ENCODE measurements at regions of chr3 and their contacts with region 1.

Region 1: DNA sequence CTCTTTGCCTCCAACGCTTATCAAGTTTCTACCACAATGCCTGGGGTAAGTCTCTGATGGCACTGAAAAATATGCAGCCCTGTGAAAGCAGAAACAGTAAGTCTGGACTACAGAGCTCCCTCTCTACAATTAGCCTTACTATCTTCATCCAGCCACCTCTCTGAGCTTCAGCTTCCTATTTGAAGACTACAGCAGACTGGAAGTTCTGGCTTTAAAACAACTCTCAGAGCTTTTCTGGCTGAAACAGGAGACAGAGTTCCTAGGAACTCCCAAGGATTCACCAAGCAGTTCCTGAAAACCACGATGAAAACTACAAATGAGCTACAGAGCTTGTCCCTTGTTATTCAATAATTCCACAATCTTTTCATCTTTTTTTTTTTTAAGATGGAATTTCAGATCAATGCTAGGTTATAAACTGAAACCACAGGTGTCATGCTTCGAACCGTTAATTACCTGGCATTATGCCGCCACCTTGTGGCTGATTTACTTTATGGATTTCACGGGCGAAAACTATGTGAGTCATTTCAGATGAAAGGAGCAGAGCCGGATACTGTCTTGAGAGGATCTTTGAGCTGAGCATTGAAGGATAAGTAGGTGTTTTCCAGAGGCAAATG is 3.9 kb downstream of the CRYGS start:
- DNase-seq: peak in 4 of 5 donors; percentile 71 to 89 (median 81)
- H3K4me3 ChIP-seq: peak overlapping the region in 2 of 3 donors; percentile 44 to 48
- H3K27ac ChIP-seq: peak overlapping the region in 1 of 2 donors; percentile 7
- H3K4me1 ChIP-seq: peaks cover 0 to 2% (median 0%) of the 10 kb centered on the region in 3 donors
- H3K27me3 ChIP-seq: no peaks in the 10 kb centered on the region
- CTCF ChIP-seq: peak; percentile 78

Region 2: DNA sequence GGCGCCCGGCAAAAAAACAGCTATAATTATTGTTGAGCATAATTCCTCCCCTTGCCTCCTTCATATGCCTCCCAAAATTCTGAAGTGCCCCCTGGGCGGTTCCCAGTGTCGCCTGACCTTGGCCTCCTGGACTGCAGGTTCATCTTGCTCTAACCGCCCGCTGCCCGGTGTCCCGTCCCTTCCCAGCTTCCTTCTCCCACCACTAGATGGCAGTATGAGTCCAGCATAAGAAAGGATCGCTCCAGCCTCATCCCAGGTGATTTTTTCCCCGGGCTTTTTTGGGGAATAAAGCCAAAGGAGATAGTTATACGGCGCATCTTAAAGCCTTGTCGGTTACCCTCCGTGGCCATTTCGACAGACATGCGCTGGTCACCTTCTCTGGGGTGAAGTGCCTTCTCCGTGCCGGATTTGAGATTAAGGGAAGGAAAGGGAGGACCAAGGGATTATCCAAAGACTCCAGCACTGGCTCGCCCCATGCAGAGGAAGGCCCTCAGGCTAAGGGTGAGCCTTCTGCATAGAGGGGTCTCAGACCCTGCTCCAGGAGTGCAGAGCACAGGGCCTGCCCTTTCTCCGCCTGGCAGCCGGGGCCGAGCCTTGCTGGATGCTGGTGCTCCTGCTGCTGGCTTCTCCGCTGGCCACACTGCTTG is 556.7 kb before region 1 on chr3:
- intact Hi-C with region 1: loop called (anchors 5 kb)
- DNase-seq: peak; percentile 75 to 86 (median 83)
- H3K4me3 ChIP-seq: no peak overlapping the region
- H3K27ac ChIP-seq: no peak overlapping the region
- H3K4me1 ChIP-seq: peaks cover 0 to 2% (median 0%) of the 10 kb centered on the region in 3 donors
- H3K27me3 ChIP-seq: no peaks in the 10 kb centered on the region
- CTCF ChIP-seq: peak; percentile 91